PC-9 (cell line): ENCODE measurements at regions of chr3 and their contacts with region 1.

Region 1: GRCh38 chr3:140176526-140176925 is 241.5 kb downstream of the CLSTN2 start:
- DNase-seq: no peak
- H3K4me3 ChIP-seq: no peak overlapping the region
- H3K27ac ChIP-seq: no peak overlapping the region
- H3K4me1 ChIP-seq: no peaks in the 10 kb centered on the region
- H3K27me3 ChIP-seq: no peaks in the 10 kb centered on the region
- CTCF ChIP-seq: no peak

Region 2: DNA sequence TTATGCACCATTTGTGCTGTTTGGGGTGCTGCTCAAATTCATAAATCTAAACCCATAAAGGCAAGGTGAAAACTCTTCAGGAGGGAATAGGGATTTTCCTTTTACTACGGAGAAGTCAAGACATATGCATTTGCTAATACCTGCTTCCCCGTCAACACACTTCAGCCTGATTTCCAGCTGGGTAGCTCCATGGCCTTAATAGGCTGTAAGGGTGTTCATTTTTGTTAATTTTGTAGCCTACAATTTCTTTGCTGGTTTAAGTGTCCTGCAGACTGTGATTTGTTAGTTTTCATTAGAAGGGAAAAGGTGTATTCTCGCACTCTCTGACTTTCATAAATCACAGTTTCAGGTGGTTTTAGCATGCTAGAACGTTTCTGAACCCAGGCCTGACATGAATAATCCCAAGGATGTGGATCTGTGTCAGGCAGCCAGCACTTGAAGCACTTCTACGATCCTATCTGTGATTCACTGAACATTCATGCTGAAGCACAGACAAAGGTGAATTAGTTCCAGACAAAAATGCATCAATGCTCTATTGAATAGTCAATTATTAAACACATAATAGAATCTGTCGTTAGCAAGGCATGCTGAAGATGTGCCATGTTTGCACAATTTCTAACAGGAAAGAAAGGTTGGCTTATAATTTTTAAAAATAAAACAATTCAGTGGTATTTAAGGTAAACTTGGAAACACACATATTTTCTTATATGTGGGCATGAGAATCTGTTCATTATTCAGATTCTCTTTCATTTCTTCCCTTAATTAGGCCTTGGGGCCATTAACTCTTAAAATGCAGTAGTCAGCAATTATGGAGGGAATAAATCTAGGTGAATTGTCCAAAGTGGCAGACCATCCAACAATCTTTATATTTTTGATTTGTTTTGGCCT is 480.9 kb before region 1 on chr3:
- CTCF ChIA-PET with region 1: no interaction called
- POLR2A ChIA-PET with region 1: no interaction called
- intact Hi-C with region 1: no loop called
- DNase-seq: no peak
- H3K4me3 ChIP-seq: no peak overlapping the region
- H3K27ac ChIP-seq: no peak overlapping the region
- H3K4me1 ChIP-seq: no peaks in the 10 kb centered on the region
- H3K27me3 ChIP-seq: peaks cover 4% of the 10 kb centered on the region; the same call in 1 of the 2 replicates
- CTCF ChIP-seq: no peak

Region 3: GRCh38 chr3:140206196-140207048 is 29.9 kb after region 1 on chr3:
- CTCF ChIA-PET with region 1: no interaction called
- POLR2A ChIA-PET with region 1: no interaction called
- intact Hi-C with region 1: loop called (anchors 1 kb)
- DNase-seq: peak in 1 of 2 experiments; percentile 6
- H3K4me3 ChIP-seq: no peak overlapping the region
- H3K27ac ChIP-seq: no peak overlapping the region
- H3K4me1 ChIP-seq: no peaks in the 10 kb centered on the region
- H3K27me3 ChIP-seq: no peaks in the 10 kb centered on the region
- CTCF ChIP-seq: 0 out of 2 replicates have a peak, but pooled peaks have one; percentile 16